ENCODE measurements at regions of chr2 and their contacts with region 1.

Region 1: DNA sequence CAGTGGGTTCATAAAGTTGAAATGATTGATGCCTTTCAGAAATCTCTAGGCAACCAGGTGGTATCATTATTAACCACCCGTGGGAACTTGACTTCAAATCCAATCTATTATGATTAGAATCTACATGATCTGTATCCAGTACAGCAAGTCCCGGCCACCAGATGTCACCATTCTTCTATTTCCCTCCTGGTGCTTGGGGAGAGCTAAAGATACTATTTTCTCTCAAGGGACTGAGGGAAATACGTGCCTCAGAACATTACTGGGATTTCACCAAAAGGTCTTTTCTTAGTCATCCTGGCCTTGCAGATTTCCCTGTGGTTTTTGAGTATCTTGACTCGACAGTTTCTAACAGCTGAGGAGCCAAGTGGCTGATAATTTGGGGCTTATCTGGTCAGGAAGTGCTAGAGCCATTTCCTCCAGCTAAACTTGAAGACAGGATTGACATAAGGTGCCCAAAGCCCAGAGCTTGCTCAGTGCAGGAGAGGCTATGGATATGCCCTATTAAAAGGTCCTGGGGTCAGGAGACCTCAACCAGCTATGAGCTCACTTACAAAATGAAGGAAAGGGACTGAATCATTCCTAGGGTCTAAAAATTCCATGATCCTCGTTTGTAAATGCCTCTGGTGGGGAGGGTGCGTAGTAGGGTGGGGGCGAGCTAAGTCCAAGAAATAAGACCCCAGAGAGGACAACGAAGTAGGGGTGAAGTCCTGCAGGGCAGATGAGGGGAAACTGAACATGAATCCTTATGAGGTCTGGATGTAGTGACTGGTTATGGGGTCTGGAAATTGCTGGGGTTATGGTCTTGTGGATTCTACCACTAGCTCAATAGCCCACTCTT is 135.4 kb upstream of the MGAT5 start:
- DNase-seq: peak; percentile 78
- ATAC-seq: peak; percentile 40
- H3K4me3 Mint-ChIP-seq: peak overlapping the region; percentile 92
- H3K27ac Mint-ChIP-seq: no peak overlapping the region
- H3K4me1 Mint-ChIP-seq: peaks cover 34% of the 10 kb centered on the region
- H3K27me3 Mint-ChIP-seq: peaks cover 11% of the 10 kb centered on the region
- CTCF ChIP-seq: 0 out of 2 replicates have a peak, but pooled peaks have one; percentile 18

Region 2: DNA sequence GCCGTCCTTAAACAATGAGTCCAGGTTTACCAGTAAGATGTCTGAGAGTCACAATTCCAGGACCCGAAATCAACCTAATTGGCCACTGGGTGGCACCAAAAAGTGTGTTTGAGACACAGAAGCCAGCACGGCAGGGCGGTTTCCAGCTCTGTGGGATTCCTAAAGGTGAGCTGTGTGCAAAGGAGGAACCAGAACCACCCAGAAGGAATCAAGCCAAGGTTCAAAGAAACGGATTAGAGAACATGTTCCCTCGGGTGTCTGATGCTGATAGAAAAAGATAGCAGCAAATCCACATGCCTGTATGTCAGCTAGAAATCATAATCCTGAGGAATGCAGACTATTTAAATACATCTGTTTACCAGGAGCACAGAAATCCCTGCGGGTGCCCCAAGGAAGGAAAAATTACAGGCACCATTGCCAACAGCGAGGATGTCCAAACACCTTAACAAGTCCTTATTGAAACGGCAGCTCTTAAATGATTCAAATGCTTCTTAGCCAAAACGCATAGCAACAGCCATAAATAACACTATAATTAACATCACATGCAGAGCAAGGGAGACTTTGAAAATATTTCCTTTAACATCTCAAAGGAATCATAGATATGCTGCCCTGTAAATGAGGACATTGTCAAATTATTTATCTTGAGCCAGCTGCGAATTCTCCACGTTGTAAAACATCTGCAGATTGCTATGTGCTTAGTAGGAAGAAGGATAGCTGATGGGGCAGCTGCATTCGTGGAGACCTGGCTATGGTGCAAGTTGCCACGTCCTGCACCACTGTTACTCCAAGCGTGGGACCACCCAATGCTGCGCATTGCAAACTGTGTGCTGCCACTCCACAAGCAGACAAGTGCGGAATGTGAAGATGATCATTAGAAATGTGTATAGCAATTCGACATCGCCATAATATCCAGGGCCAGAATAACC is 231.5 kb before region 1 on chr2:
- CTCF ChIA-PET with region 1: interaction called, 33 read pairs
- POLR2A ChIA-PET with region 1: no interaction called
- DNase-seq: peak; percentile 75
- ATAC-seq: peak; percentile 88
- H3K4me3 Mint-ChIP-seq: no peak overlapping the region
- H3K27ac Mint-ChIP-seq: no peak overlapping the region
- H3K4me1 Mint-ChIP-seq: peaks cover 18% of the 10 kb centered on the region
- H3K27me3 Mint-ChIP-seq: no peaks in the 10 kb centered on the region; the same call in none of the 2 replicates
- CTCF ChIP-seq: peak; percentile 32; the same call in 1 of the 2 replicates

Region 3: DNA sequence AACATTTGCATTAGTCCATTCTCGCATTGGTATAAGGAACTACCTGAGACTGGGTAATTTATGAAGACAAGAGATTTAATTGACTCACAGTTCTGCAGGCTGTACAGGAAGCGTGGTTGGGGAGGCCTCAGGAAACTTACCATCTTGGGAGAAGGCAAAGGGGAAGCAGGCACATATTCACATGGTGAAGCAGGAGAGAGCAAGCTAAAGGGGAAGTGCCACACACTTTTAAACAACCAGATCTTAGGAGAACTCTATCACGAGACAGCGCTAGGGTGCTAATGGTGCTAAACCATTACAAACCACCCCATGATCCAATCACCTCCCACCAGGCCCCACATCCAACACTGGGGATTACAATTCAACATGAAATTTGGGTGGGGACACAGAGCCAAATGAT is 66.3 kb before region 1 on chr2:
- CTCF ChIA-PET with region 1: no interaction called
- POLR2A ChIA-PET with region 1: no interaction called
- DNase-seq: no peak
- ATAC-seq: no peak
- H3K4me3 Mint-ChIP-seq: no peak overlapping the region
- H3K27ac Mint-ChIP-seq: no peak overlapping the region
- H3K4me1 Mint-ChIP-seq: 0 out of 2 replicates have a peak, but pooled peaks cover 2% of the 10 kb centered on the region
- H3K27me3 Mint-ChIP-seq: no peaks in the 10 kb centered on the region; the same call in 1 of the 2 replicates
- CTCF ChIP-seq: no peak

Region 4: DNA sequence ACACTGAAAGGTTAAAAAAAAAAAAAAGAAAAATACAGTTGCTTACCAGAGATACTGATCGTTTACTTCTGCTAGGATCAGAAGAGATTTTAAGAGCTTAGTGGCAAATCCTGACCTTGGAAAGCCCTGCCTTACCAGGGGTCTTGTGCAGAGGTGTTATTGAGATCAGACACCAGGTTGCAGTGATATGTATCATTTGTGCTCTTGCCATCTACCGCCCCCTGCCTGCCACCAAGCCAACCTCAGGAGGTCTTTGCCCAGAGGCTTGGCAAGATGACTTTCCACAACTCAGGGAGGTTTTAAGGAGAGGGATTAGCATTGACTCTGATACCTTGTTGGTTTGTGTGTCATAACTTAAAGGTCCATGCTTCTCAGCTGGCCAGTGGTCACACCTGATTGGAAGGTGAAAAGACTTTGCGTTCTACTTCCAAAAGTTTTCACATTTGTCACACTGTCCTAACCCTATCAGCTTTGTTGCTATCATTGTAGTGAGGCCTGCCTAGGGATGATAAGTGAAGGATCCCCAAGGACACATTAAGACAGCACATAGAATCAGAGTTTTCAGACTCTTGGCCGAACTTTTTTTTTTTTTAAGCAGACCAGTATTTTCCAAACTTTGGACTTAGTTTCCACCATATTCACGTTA is 89.2 kb after region 1 on chr2:
- CTCF ChIA-PET with region 1: interaction called, 116 read pairs
- POLR2A ChIA-PET with region 1: interaction called, 17 read pairs
- DNase-seq: peak; percentile 66
- ATAC-seq: peak; percentile 83
- H3K4me3 Mint-ChIP-seq: no peak overlapping the region
- H3K27ac Mint-ChIP-seq: no peak overlapping the region
- H3K4me1 Mint-ChIP-seq: peaks cover 12% of the 10 kb centered on the region
- H3K27me3 Mint-ChIP-seq: no peaks in the 10 kb centered on the region
- CTCF ChIP-seq: peak; percentile 56

Region 5: DNA sequence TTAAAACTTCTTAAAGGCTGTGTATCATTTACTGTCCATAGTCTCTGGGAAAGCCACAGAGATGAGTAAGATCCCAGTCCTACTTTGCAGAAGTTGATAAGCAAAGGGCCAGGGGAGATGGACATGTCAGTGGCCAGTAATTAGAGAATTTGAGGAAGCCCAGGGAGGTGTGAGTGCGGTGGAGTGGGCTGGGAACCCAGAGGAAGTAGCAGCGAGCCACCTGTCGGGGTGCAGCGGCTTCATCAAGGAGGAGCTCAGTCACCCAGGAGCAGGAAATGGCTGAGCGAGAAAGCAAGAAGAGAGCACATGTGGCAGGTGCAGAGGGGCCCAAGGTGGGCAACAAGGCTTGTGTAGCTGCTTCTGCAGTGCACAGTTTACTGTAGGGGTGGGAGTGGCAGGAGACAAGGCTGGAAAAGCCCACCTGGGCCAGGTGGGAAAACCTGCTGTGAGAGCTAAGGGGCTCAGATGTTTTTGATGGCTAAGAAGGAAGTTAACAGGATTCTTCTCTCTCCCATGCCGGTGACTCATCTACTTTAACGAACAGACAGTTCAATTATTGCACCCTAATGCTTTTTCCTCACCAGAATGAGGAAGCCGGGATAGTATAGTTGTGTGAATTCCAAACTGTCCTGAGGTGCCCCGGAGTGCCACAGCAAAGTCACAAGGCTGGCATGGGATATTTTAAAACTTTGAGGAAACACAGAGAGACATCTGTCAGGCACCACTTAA is 100.6 kb after region 1 on chr2:
- CTCF ChIA-PET with region 1: interaction called, 13 read pairs
- POLR2A ChIA-PET with region 1: no interaction called
- DNase-seq: no peak
- ATAC-seq: peak; percentile 31; the same call in 1 of the 2 replicates
- H3K4me3 Mint-ChIP-seq: no peak overlapping the region
- H3K27ac Mint-ChIP-seq: no peak overlapping the region
- H3K4me1 Mint-ChIP-seq: peaks cover 49% of the 10 kb centered on the region
- H3K27me3 Mint-ChIP-seq: no peaks in the 10 kb centered on the region
- CTCF ChIP-seq: no peak

Region 6: GRCh38 chr2:134228493-134228903 is 110.0 kb after region 1 on chr2:
- CTCF ChIA-PET with region 1: interaction called, 17 read pairs
- POLR2A ChIA-PET with region 1: no interaction called
- DNase-seq: no peak
- ATAC-seq: peak; percentile 71
- H3K4me3 Mint-ChIP-seq: no peak overlapping the region
- H3K27ac Mint-ChIP-seq: no peak overlapping the region
- H3K4me1 Mint-ChIP-seq: peaks cover 20% of the 10 kb centered on the region
- H3K27me3 Mint-ChIP-seq: no peaks in the 10 kb centered on the region; the same call in 1 of the 2 replicates
- CTCF ChIP-seq: peak; percentile 38; the same call in 1 of the 2 replicates

Region 7: GRCh38 chr2:134245340-134245984 is 127.0 kb after region 1 on chr2:
- CTCF ChIA-PET with region 1: interaction called, 80 read pairs
- POLR2A ChIA-PET with region 1: no interaction called
- DNase-seq: peak; percentile 80
- ATAC-seq: peak; percentile 81
- H3K4me3 Mint-ChIP-seq: no peak overlapping the region
- H3K27ac Mint-ChIP-seq: no peak overlapping the region
- H3K4me1 Mint-ChIP-seq: peaks cover 23% of the 10 kb centered on the region
- H3K27me3 Mint-ChIP-seq: no peaks in the 10 kb centered on the region
- CTCF ChIP-seq: peak; percentile 85

Region 8: DNA sequence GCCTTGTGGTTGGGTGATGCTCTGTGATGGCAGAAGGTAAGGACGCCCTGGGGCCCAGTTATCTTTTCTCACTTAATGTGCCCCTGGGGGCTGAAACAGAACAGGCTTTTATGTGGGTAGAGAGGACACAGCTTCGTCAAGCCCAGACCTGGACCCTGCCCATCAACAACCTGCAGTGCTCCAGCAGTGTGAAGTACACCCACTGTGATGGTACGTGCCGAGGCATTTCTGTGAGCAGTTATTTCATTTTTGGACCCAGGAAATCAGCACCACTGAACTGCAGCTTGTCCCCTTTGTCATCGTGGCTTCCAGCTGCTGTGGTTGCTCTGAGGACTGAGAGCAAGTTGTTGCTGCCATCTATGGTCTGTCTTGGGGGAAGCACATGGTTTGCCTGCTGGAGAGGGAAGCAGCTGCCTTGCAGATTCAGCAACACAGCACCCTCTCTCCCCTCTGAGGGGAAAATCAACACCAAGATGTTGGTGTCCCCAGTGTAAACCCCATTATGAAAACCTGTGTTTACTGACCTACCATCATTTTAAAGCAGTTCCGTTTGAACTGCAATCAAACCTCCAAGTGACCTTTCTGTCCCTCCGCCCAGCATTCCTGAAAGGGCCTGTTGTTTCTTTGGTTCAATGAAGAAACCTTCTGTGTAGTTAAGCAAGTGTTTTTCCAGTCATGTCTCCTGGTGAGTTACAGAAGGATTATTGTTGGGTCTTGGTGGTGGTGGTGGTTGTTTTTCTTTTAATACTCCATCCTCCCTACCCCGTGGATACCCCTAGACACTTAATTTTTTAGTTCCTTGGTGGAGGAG is 293.5 kb after region 1 on chr2:
- CTCF ChIA-PET with region 1: interaction called, 34 read pairs
- POLR2A ChIA-PET with region 1: interaction called, 4 read pairs
- DNase-seq: peak; percentile 64
- ATAC-seq: peak; percentile 97
- H3K4me3 Mint-ChIP-seq: no peak overlapping the region
- H3K27ac Mint-ChIP-seq: no peak overlapping the region
- H3K4me1 Mint-ChIP-seq: peaks cover 13% of the 10 kb centered on the region
- H3K27me3 Mint-ChIP-seq: no peaks in the 10 kb centered on the region
- CTCF ChIP-seq: 0 out of 2 replicates have a peak, but pooled peaks have one; percentile 28